Ovary (tissue), 10 donors: ENCODE measurements at regions of chr9 and their contacts with region 1.

Region 1: GRCh38 chr9:90702441-90702955 is 59.9 kb upstream of the DIRAS2 start:
- DNase-seq: no peak
- H3K4me3 ChIP-seq: no peak overlapping the region
- H3K27ac ChIP-seq: no peak overlapping the region
- H3K4me1 ChIP-seq: no peaks in the 10 kb centered on the region
- H3K27me3 ChIP-seq: no peaks in the 10 kb centered on the region
- CTCF ChIP-seq: no peak
- EP300 ChIP-seq: no peak
- POLR2A ChIP-seq: no peak

Region 2: GRCh38 chr9:89945133-89945532 is 757.4 kb before region 1 on chr9:
- intact Hi-C with region 1: loop called in 1 of 4 experiments (anchors 5 kb)
- DNase-seq: no peak
- H3K4me3 ChIP-seq: no peak overlapping the region
- H3K27ac ChIP-seq: no peak overlapping the region
- H3K4me1 ChIP-seq: peaks cover 8% of the 10 kb centered on the region
- H3K27me3 ChIP-seq: no peaks in the 10 kb centered on the region
- CTCF ChIP-seq: no peak
- EP300 ChIP-seq: no peak
- POLR2A ChIP-seq: no peak

Region 3: DNA sequence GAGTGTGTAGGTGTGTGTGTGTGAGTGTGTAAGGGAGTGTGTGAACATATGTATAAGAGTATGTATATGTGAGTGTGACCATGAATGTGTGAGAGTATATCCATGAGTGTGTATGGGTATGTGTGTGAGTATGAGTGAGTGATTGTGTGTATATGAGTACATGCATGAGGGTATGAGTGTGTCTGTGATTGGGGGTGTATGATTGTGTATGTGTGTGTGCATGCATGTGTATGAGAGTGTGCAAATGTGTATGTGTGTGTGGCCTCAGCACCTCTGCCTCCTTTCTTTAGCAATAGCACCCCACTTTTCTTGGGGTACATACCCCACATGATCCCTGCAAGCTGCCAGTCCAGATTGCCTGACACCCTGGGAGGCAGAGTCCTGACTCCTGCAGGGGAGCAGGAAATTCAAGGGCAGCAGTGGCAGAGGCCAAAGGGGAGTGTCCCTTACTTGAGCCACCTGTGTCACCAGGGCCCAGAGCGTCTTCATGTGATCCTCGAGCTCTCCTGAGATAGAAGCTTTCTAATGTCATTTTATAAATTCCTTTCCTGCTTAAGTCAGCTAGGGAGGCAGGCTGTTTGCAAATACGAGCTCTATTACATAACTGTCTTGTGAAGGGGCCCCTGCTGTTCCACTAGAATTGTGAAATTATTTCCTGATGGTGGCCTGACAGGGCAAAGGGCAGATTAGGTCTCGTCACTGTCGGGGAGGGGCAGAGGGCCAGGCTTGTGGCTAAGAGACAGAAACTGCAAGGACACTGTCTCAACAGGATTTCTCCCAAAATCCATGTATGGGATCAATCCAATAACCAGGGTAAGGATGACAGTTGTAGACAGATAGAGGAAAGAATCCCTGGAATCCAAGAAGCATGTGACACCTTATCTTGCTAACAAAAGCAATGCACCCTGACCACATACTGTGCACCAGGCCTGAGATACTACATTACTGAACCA is 708.5 kb before region 1 on chr9:
- intact Hi-C with region 1: no loop called
- DNase-seq: peak in 1 of 5 donors; percentile 25
- H3K4me3 ChIP-seq: no peak overlapping the region
- H3K27ac ChIP-seq: no peak overlapping the region
- H3K4me1 ChIP-seq: peaks cover 23% of the 10 kb centered on the region
- H3K27me3 ChIP-seq: no peaks in the 10 kb centered on the region
- CTCF ChIP-seq: no peak
- EP300 ChIP-seq: no peak
- POLR2A ChIP-seq: no peak